Transverse colon (tissue), 4 donors: ENCODE measurements at regions of chr6 and their contacts with region 1.

Region 1: DNA sequence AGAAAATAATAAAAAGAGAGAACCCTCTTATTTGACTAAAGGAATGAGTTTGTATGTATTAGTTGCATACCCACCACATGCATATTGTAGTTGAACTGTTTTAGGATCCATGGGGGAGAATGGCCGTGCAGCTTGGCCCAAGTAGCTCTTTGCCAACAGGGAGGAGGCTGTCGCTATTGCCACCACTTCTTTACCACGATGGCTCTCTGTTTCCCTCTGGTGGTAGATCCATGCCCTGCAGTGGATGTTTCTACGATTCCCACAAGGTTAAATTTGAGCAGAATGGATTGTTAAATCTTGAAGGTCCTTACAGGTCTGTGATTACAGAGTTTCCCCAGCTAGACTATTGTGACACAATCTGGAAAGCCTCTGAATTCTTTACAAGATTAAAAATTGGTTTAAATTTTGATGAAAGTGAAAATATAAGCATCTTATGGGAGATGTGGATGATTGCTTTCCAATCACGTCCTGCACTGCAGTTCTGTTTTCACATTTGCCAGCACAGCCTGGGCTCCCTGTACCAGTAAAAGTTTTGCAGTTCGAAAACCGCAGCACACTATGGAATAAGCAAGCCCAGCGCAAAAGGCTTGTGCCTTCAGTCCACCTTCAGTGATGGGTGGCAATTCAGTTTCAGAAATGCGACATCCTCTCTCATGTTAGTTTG is 34.4 kb upstream of the FNDC1 start:
- DNase-seq: peak; percentile 80
- H3K4me3 ChIP-seq: no peak overlapping the region
- H3K27ac ChIP-seq: no peak overlapping the region
- H3K4me1 ChIP-seq: no peaks in the 10 kb centered on the region
- H3K27me3 ChIP-seq: peaks cover 21% of the 10 kb centered on the region
- CTCF ChIP-seq: peak; percentile 81 to 93 (median 93)
- EP300 ChIP-seq: no peak
- POLR2A ChIP-seq: no peak

Region 2: GRCh38 chr6:158366363-158366762 is 768.5 kb before region 1 on chr6:
- in situ Hi-C with region 1: no loop called
- intact Hi-C with region 1: no loop called
- DNase-seq: no peak
- H3K4me3 ChIP-seq: no peak overlapping the region
- H3K27ac ChIP-seq: no peak overlapping the region
- H3K4me1 ChIP-seq: peaks cover 0 to 3% (median 0%) of the 10 kb centered on the region in 4 donors
- H3K27me3 ChIP-seq: no peaks in the 10 kb centered on the region
- CTCF ChIP-seq: no peak
- EP300 ChIP-seq: no peak
- POLR2A ChIP-seq: no peak

Region 3: DNA sequence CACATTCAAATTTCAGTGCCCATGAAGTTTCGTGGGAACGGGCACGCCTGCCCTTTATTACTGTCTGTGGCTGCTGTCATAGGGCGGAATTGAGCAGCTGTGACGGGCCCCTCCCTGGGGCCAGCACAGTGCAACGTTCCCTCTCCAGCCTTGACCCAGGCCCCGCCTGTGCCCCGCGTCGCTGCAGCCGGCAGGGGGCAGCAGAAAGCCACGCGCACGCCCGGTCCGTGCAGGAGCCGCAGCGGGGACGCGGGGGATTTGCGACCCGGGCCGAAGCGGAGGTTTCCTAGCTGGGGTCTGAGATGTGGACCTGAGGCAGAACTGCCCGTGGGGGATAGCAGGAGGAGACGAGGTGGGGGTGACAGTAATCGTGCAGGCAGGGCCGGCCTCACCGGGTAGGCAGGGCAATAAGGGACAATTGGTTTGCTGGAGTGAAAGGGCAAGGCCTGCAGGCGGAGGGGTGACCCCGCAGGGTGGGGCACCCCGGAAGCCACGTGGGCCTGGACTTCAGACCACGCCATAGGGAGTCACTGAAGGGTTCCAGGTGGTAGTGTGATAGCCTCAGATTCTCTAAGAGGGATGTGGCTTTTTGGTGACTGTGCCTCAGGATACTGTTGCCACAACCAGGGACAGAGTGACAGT is 430.5 kb before region 1 on chr6:
- in situ Hi-C with region 1: loop called in 1 of 4 experiments (anchors 25 kb)
- intact Hi-C with region 1: no loop called
- DNase-seq: peak; percentile 93
- H3K4me3 ChIP-seq: peak overlapping the region in 3 of 4 donors; percentile 31 to 56 (median 33)
- H3K27ac ChIP-seq: peak overlapping the region; percentile 74 to 80 (median 76)
- H3K4me1 ChIP-seq: peaks cover 8 to 51% (median 35%) of the 10 kb centered on the region in 4 donors
- H3K27me3 ChIP-seq: no peaks in the 10 kb centered on the region
- CTCF ChIP-seq: peak; percentile 99 to 100 (median 99)
- EP300 ChIP-seq: peak; percentile 49
- POLR2A ChIP-seq: peak; percentile 26

Region 4: DNA sequence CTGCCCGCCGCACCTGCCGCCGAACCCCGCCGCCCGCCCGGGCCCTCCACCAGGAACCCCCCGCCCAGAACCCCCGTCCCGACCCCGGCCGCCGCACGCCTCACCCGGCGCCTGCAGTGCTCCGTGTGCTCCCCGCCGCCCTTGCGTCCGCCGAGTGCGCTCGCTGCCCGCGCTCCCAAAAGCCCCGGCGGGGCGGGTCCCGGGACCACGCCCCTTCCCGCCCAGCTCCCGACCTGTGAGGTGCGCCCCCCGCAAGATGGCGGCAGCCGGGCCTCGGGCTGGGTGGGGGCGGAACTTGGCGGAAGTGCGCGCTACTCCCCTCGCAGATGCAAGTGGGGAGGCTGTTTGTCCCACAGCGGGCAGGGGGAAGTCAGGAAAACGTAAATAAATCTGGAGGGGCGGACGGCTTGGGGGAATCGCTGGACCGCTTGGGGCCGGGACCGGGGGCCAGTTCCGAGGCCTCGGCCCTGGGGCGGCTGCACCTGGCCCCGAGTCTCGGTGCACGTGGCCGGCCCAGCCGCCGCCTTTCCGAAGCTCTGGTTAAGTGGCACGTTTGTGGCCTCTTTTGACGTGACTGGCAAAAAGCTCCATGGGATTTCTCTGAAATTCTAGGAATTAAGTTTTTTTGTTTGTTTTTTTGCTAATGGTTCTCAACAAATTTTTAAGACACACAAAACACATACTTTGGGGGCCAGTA is 315.5 kb before region 1 on chr6 and contains the start of gene EZR:
- in situ Hi-C with region 1: no loop called
- intact Hi-C with region 1: no loop called
- DNase-seq: peak; percentile 90
- H3K4me3 ChIP-seq: peak within 1 kb of the TSS; percentile 80 to 99 (median 94)
- H3K27ac ChIP-seq: peak within 1 kb of the TSS; percentile 96 to 100 (median 99)
- H3K4me1 ChIP-seq: peaks cover 12 to 37% (median 24%) of the 10 kb centered on the region in 4 donors
- H3K27me3 ChIP-seq: no peaks in the 10 kb centered on the region
- CTCF ChIP-seq: peak in 3 of 5 experiments; percentile 9 to 30 (median 10)
- EP300 ChIP-seq: no peak
- POLR2A ChIP-seq: peak; percentile 81
- total RNA-seq, gene EZR: 149 to 430 (median 319) TPM

Region 5: DNA sequence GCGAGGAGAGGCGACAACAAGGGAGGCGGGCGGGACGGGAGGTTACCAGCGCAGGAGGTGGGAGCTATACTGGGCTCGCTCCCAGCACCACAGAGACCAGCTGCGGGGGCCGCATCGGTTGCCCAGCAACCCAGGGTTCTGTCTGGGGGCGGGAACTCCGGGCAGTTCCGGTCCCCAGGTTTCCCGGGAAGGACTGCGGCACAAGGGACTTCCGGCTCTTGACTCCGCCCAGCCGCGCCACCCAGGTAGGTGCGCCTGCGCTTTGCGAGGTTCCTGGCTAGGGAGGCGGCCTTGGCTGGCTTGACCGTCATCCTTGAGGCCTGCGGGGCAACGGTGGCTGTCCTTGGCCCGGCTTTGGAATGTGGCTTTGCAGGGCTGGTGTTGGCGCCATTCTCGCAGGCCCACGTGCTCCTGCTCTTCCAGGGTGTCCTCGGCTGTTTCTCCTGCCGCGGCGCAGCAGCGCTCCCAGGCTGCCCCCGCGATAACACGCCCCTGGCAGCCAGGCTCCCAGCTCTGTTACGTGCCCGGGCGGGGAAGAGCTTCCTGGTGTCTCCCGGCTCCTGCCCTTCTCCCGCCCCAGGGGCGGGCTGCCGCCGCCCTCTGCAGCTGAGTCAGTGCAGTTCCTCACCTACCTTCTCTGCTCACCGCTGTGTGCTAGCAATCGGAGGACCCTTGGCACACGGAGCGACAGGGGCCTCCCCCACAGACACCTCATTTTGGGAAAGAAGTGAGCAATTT is 135.0 kb before region 1 on chr6 and contains the start of gene RSPH3:
- in situ Hi-C with region 1: loop called in 1 of 4 experiments (anchors 10 kb)
- intact Hi-C with region 1: no loop called
- DNase-seq: peak; percentile 97
- H3K4me3 ChIP-seq: peak within 1 kb of the TSS; percentile 58 to 98 (median 85)
- H3K27ac ChIP-seq: peak within 1 kb of the TSS; percentile 90 to 95 (median 92)
- H3K4me1 ChIP-seq: peaks cover 0 to 20% (median 10%) of the 10 kb centered on the region in 4 donors
- H3K27me3 ChIP-seq: no peaks in the 10 kb centered on the region
- CTCF ChIP-seq: peak in 2 of 5 experiments; percentile 5 to 17
- EP300 ChIP-seq: no peak
- POLR2A ChIP-seq: peak; percentile 91
- total RNA-seq, gene RSPH3: 13.3 to 24.1 (median 23.5) TPM

Region 6: GRCh38 chr6:159042003-159042825 is 92.6 kb before region 1 on chr6:
- in situ Hi-C with region 1: no loop called
- intact Hi-C with region 1: loop called (anchors 10 kb)
- DNase-seq: peak; percentile 79
- H3K4me3 ChIP-seq: peak overlapping the region in 2 of 4 donors; percentile 7 to 45
- H3K27ac ChIP-seq: peak overlapping the region; percentile 59 to 67 (median 64)
- H3K4me1 ChIP-seq: peaks cover 0 to 16% (median 0%) of the 10 kb centered on the region in 4 donors
- H3K27me3 ChIP-seq: no peaks in the 10 kb centered on the region
- CTCF ChIP-seq: peak; percentile 86 to 95 (median 94)
- EP300 ChIP-seq: no peak
- POLR2A ChIP-seq: no peak

Region 7: DNA sequence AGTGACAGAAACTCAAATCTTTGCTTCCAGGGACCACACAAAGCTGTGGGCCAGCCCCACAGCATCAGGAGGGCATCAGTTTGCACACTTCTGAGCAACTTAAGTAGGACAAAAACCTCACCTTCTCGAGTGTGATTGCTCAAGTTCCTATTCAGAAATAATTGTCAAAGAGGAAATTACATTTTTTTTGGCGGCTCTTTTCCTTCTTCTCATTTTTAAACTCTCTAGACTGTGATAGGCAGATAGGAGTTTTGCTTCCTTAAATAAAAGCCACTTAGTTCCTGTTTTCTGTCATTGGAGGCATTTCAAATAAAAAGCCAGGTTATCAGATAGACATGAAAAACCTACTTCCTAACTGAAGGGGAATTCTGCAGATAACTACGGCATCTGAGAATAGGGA is 78.8 kb before region 1 on chr6:
- in situ Hi-C with region 1: no loop called
- intact Hi-C with region 1: no loop called
- DNase-seq: no peak
- H3K4me3 ChIP-seq: no peak overlapping the region
- H3K27ac ChIP-seq: peak overlapping the region in 1 of 4 donors; percentile 25
- H3K4me1 ChIP-seq: peaks cover 0 to 8% (median 0%) of the 10 kb centered on the region in 4 donors
- H3K27me3 ChIP-seq: no peaks in the 10 kb centered on the region
- CTCF ChIP-seq: no peak
- EP300 ChIP-seq: no peak
- POLR2A ChIP-seq: no peak